ENCODE measurements at regions of chr14 and their contacts with region 1.

Region 1: GRCh38 chr14:53924754-53925153 is 31.9 kb downstream of the BMP4 start:
- DNase-seq: no peak
- CTCF ChIP-seq: no peak

Region 2: DNA sequence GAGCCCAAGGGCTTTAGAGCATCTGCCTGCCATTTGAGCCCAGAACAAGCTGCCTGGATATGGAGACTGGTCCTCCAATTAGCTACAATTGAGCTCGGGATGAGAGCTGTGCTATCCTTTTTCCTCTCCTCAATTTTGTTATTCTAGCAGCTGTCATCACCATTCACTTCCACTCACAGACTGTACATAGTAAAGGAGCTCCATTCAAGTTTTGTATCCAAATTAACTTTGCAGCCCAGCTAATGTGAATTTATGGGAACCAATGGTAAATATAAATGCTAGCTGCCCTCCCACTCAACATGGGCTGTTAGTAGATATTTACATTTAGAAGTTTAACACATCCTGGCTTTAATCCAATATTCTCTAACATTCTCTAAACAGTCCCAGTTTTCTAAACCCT is 12.7 kb before region 1 on chr14:
- CTCF ChIA-PET with region 1: interaction called, 10 read pairs
- POLR2A ChIA-PET with region 1: no interaction called
- DNase-seq: no peak
- CTCF ChIP-seq: no peak

Region 3: GRCh38 chr14:53938192-53938842 is 13.6 kb after region 1 on chr14:
- CTCF ChIA-PET with region 1: interaction called, 29 read pairs
- POLR2A ChIA-PET with region 1: no interaction called
- DNase-seq: no peak
- CTCF ChIP-seq: no peak

Measured in GM10248 (cell line).